Ovary (tissue), 10 donors: ENCODE measurements at regions of chr20 and their contacts with region 1.

Region 1: GRCh38 chr20:11204926-11205768 is 531.3 kb upstream of the JAG1 start:
- DNase-seq: peak in 2 of 5 donors; percentile 30 to 59
- H3K4me3 ChIP-seq: no peak overlapping the region
- H3K27ac ChIP-seq: no peak overlapping the region
- H3K4me1 ChIP-seq: no peaks in the 10 kb centered on the region
- H3K27me3 ChIP-seq: no peaks in the 10 kb centered on the region
- CTCF ChIP-seq: peak in 2 of 3 donors; percentile 16 to 40
- EP300 ChIP-seq: no peak
- POLR2A ChIP-seq: no peak

Region 2: DNA sequence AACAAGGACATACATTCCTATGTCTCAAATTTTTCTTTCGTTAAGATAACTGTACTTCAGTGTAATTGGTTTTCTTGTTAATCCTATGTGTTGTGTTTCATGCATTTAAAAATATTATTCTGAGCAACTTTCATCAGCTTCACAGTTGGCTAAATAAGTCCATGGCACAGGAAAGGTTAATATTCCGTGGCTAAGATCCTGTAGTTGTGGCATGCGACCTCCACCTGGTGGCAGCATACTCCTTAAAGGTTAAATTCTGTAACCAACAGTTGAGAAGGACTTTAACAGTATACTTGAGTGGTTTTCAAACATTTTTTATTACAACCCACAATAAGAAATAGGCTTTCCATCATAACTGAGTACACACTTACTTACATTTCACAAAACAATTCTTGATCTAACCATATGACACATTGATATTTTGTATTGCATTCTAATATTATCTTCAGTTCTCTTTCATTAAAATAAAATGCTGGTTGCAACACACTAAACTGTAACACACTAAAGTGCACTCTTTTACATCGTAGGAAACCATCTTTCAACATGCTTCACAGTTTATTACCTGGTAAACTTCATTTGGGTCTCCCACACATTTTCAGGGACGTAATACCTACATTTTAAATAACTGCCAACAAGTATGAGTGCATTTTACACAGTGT is 651.7 kb before region 1 on chr20:
- intact Hi-C with region 1: loop called in 1 of 4 experiments (anchors 10 kb)
- DNase-seq: peak; percentile 30 to 81 (median 66)
- H3K4me3 ChIP-seq: no peak overlapping the region
- H3K27ac ChIP-seq: no peak overlapping the region
- H3K4me1 ChIP-seq: peaks cover under 1% of the 10 kb centered on the region
- H3K27me3 ChIP-seq: no peaks in the 10 kb centered on the region
- CTCF ChIP-seq: peak; percentile 52 to 76 (median 69)
- EP300 ChIP-seq: no peak
- POLR2A ChIP-seq: no peak

Region 3: GRCh38 chr20:11098888-11099287 is 106.3 kb before region 1 on chr20:
- intact Hi-C with region 1: no loop called
- DNase-seq: no peak
- H3K4me3 ChIP-seq: no peak overlapping the region
- H3K27ac ChIP-seq: no peak overlapping the region
- H3K4me1 ChIP-seq: no peaks in the 10 kb centered on the region
- H3K27me3 ChIP-seq: no peaks in the 10 kb centered on the region
- CTCF ChIP-seq: no peak
- EP300 ChIP-seq: no peak
- POLR2A ChIP-seq: no peak

Region 4: GRCh38 chr20:11153819-11154218 is 51.3 kb before region 1 on chr20:
- intact Hi-C with region 1: no loop called
- DNase-seq: no peak
- H3K4me3 ChIP-seq: no peak overlapping the region
- H3K27ac ChIP-seq: no peak overlapping the region
- H3K4me1 ChIP-seq: no peaks in the 10 kb centered on the region
- H3K27me3 ChIP-seq: no peaks in the 10 kb centered on the region
- CTCF ChIP-seq: no peak
- EP300 ChIP-seq: no peak
- POLR2A ChIP-seq: no peak

Region 5: DNA sequence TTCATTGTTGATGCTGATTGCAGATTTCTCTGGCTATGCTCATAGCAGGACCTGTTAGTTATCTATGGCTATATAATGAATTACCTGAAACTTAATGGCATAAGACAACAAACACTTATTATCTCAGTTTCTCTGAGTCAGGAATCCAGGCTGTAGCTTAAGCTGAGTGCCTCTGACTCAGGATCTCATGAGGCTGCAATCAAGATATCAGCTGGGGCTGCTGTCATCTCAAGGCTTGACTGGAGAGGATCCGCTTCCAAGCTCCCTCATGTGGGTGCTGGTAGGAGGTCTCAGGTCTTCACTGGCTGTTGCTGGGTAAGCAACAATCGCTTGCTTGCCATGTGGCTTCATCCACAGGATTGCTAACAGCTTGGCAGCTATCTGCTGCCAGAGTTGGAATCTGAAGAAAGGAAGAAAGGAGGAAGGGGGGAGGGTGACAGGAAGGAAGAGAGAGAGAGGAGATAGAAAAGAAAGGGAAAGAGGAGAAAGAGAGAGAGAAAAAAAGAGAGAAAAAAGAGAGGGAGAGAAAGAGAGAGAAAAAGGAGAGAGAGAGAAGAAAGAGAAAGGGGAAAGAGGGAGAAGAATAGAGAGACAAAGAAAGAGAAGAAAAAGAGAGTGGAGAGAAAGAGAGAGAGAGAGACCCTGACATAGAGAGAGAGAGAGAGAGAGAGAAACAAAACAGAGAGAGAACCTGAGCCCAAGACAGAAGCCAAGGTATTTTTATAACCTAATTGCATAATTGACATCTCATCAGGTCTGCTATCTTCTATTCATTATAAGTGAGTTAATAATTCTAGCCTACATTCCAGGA is 133.6 kb after region 1 on chr20:
- intact Hi-C with region 1: no loop called
- DNase-seq: no peak
- H3K4me3 ChIP-seq: no peak overlapping the region
- H3K27ac ChIP-seq: no peak overlapping the region
- H3K4me1 ChIP-seq: no peaks in the 10 kb centered on the region
- H3K27me3 ChIP-seq: no peaks in the 10 kb centered on the region
- CTCF ChIP-seq: no peak
- EP300 ChIP-seq: no peak
- POLR2A ChIP-seq: no peak